Gastrocnemius medialis (tissue), 4 donors: ENCODE measurements at regions of chr13 and their contacts with region 1.

Region 1: GRCh38 chr13:34779171-34779570 is 162.9 kb upstream of the NBEA start:
- DNase-seq: no peak
- ATAC-seq: no peak
- H3K4me3 ChIP-seq: no peak overlapping the region
- H3K27ac ChIP-seq: no peak overlapping the region
- H3K4me1 ChIP-seq: no peaks in the 10 kb centered on the region
- H3K27me3 ChIP-seq: no peaks in the 10 kb centered on the region
- CTCF ChIP-seq: peak in 1 of 5 experiments; percentile 22
- POLR2A ChIP-seq: no peak

Region 2: GRCh38 chr13:34842466-34842865 is 63.3 kb after region 1 on chr13:
- in situ Hi-C with region 1: loop called in 1 of 4 experiments (anchors 10 kb)
- intact Hi-C with region 1: no loop called
- DNase-seq: no peak
- ATAC-seq: no peak
- H3K4me3 ChIP-seq: no peak overlapping the region
- H3K27ac ChIP-seq: no peak overlapping the region
- H3K4me1 ChIP-seq: no peaks in the 10 kb centered on the region
- H3K27me3 ChIP-seq: no peaks in the 10 kb centered on the region
- CTCF ChIP-seq: no peak
- POLR2A ChIP-seq: no peak